CD8-positive, alpha-beta T cell (primary cell): ENCODE measurements at regions of chr15 and their contacts with region 1.

Region 1: GRCh38 chr15:85582131-85583079 is 202.0 kb downstream of the AKAP13 start:
- DNase-seq: peak; percentile 24 to 84 (median 75)
- ATAC-seq: peak; percentile 71
- H3K4me3 ChIP-seq: peak overlapping the region; percentile 54 to 57
- H3K4me3 Mint-ChIP-seq: peak overlapping the region; percentile 84
- H3K27ac ChIP-seq: peak overlapping the region; percentile 88 to 93
- H3K27ac Mint-ChIP-seq: peak overlapping the region; percentile 95
- H3K4me1 ChIP-seq: peaks cover 50% of the 10 kb centered on the region
- H3K4me1 Mint-ChIP-seq: peaks cover 75% of the 10 kb centered on the region
- H3K27me3 ChIP-seq: no peaks in the 10 kb centered on the region
- H3K27me3 Mint-ChIP-seq: no peaks in the 10 kb centered on the region
- CTCF ChIP-seq: no peak

Region 2: DNA sequence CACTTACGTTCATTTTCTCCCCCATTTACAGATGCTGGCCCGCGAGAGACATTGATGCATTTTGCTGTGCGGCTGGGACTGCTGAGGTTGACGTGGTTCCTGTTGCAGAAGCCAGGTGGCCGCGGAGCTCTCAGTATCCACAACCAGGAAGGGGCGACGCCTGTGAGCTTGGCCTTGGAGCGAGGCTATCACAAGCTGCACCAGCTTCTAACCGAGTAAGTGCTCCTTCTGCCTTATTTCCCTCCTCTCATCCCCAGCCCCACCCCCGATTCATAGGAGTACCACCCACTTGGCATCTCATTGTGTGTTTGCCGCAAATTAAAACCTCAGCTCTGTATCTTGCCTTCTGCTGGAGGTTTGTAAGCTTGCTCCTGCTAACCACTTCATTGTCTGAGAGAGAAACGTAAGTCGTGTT is 38.7 kb before region 1 on chr15:
- CTCF ChIA-PET with region 1: interaction called, 4 read pairs
- POLR2A ChIA-PET with region 1: interaction called, 4 read pairs
- intact Hi-C with region 1: loop called (anchors 2 to 5 kb)
- DNase-seq: peak; percentile 10 to 82 (median 61)
- ATAC-seq: peak; percentile 84
- H3K4me3 ChIP-seq: peak overlapping the region in 1 of 2 experiments; percentile 9
- H3K4me3 Mint-ChIP-seq: peak overlapping the region; percentile 67
- H3K27ac ChIP-seq: peak overlapping the region; percentile 11 to 24
- H3K27ac Mint-ChIP-seq: peak overlapping the region; percentile 78
- H3K4me1 ChIP-seq: peaks cover 40% of the 10 kb centered on the region
- H3K4me1 Mint-ChIP-seq: peaks cover 75% of the 10 kb centered on the region
- H3K27me3 ChIP-seq: no peaks in the 10 kb centered on the region
- H3K27me3 Mint-ChIP-seq: no peaks in the 10 kb centered on the region
- CTCF ChIP-seq: peak; percentile 34

Region 3: DNA sequence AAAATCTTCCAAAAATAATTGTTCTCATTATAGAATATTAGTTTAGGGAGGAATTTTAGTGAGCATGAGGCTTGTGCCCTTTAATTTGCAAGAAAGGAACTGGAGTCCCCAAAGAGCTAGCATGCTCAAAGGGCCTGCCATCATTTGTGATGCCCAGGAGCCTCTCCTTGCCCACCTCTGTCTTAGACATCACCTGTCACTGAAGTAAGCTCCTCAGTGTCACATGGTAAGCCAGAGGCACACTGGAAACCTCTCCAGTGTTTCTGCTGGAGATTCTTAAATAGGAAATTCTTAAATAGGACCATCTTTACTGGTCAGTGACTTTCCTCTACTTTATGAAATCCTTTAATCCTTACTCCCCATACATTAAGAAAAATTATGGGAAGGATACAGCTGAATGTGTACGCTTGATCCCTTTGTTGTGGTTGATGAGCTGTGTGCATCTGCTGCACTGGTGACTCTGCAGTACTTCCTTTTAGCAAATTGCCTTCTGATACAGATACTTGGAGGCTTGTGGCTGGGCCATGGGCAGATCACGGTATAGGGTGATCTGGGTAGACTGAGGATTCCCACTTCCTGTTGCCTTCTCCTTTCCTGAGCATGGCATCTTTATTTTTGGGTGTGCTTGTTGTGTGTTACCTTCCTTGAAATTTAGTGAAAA is 14.9 kb after region 1 on chr15:
- CTCF ChIA-PET with region 1: interaction called, 3 read pairs
- POLR2A ChIA-PET with region 1: interaction called, 5 read pairs
- intact Hi-C with region 1: loop called in 1 of 2 experiments (anchors 1 kb)
- DNase-seq: peak in 4 of 9 experiments; percentile 24 to 66 (median 32)
- ATAC-seq: peak; percentile 87
- H3K4me3 ChIP-seq: no peak overlapping the region
- H3K4me3 Mint-ChIP-seq: peak overlapping the region; percentile 30
- H3K27ac ChIP-seq: no peak overlapping the region
- H3K27ac Mint-ChIP-seq: peak overlapping the region; percentile 49
- H3K4me1 ChIP-seq: peaks cover 18% of the 10 kb centered on the region
- H3K4me1 Mint-ChIP-seq: peaks cover 50% of the 10 kb centered on the region
- H3K27me3 ChIP-seq: no peaks in the 10 kb centered on the region
- H3K27me3 Mint-ChIP-seq: no peaks in the 10 kb centered on the region
- CTCF ChIP-seq: no peak

Region 4: DNA sequence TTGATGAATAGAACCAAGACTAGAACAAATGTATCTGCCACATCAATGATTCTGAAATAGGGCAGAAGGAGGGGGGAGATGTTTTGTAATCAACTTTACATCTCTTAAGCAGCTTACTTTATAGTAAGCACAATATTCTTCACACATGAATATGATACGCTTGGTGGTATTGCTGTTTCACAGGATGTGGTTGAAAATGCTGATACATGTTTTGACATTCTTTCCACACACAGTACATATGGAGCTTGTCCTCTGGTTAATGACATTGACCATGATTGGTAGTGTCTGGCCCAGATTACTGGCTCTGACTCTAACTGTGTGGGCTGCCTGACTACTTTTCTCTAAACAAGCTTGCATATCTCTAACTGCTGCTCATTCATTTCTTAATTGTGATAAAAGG is 43.5 kb after region 1 on chr15:
- CTCF ChIA-PET with region 1: no interaction called
- POLR2A ChIA-PET with region 1: interaction called, 6 read pairs
- intact Hi-C with region 1: loop called in 1 of 2 experiments (anchors 2 kb)
- DNase-seq: peak in 3 of 9 experiments; percentile 11 to 82 (median 67)
- ATAC-seq: peak; percentile 72
- H3K4me3 ChIP-seq: no peak overlapping the region
- H3K4me3 Mint-ChIP-seq: peak overlapping the region; percentile 59
- H3K27ac ChIP-seq: peak overlapping the region; percentile 24 to 71
- H3K27ac Mint-ChIP-seq: peak overlapping the region; percentile 91
- H3K4me1 ChIP-seq: peaks cover 34% of the 10 kb centered on the region
- H3K4me1 Mint-ChIP-seq: peaks cover 73% of the 10 kb centered on the region
- H3K27me3 ChIP-seq: no peaks in the 10 kb centered on the region
- H3K27me3 Mint-ChIP-seq: no peaks in the 10 kb centered on the region
- CTCF ChIP-seq: no peak

Region 5: GRCh38 chr15:85667491-85668424 is 85.4 kb after region 1 on chr15:
- CTCF ChIA-PET with region 1: no interaction called
- POLR2A ChIA-PET with region 1: interaction called, 3 read pairs
- intact Hi-C with region 1: loop called in 1 of 2 experiments (anchors 5 kb)
- DNase-seq: peak in 8 of 9 experiments; percentile 23 to 97 (median 62)
- ATAC-seq: peak; percentile 91
- H3K4me3 ChIP-seq: no peak overlapping the region
- H3K4me3 Mint-ChIP-seq: peak overlapping the region; percentile 40
- H3K27ac ChIP-seq: peak overlapping the region; percentile 53 to 96
- H3K27ac Mint-ChIP-seq: peak overlapping the region; percentile 92
- H3K4me1 ChIP-seq: peaks cover 13% of the 10 kb centered on the region
- H3K4me1 Mint-ChIP-seq: peaks cover 22% of the 10 kb centered on the region
- H3K27me3 ChIP-seq: no peaks in the 10 kb centered on the region
- H3K27me3 Mint-ChIP-seq: no peaks in the 10 kb centered on the region
- CTCF ChIP-seq: no peak

Region 6: DNA sequence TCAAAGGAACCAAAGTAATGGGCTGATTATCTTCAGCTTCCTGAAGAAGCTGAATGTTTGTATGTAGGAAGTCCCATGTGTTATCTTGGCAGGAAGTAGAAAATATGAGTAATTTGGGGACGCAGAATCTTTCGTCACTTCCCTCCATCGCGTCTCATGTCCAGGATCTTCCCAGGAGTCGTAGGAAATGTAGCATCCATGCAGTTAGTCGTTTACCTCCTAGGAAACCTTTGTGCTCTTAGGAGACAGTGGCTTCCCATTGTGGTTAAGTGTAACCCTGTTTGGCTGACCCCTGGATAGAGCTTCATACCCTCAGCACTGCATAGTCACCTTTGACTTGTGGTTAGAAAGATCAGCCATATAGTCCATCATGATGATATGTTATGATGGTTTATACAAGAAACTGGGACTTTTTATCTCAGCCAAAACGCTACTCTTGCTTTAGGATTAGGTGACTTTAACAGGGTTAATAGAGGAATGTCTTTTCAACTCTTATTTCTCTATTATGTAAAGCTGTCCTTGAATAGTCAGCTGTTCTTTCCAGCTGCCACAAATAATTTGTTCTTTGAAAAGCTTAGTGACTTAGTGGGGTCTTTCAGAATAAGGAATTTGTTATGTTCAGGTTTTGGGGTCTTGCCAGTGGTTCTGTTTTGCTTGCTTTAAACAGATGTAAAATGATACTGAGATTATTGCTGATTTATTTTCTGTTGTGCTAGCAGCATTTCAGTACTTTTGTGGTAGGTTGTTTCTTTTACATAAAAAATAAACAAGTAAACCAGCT is 120.1 kb after region 1 on chr15:
- CTCF ChIA-PET with region 1: no interaction called
- POLR2A ChIA-PET with region 1: interaction called, 3 read pairs
- intact Hi-C with region 1: loop called (anchors 1 to 5 kb)
- DNase-seq: peak in 5 of 9 experiments; percentile 17 to 88 (median 39)
- ATAC-seq: peak; percentile 40
- H3K4me3 ChIP-seq: peak overlapping the region; percentile 3 to 24
- H3K4me3 Mint-ChIP-seq: peak overlapping the region; percentile 70
- H3K27ac ChIP-seq: peak overlapping the region; percentile 70 to 97
- H3K27ac Mint-ChIP-seq: peak overlapping the region; percentile 94
- H3K4me1 ChIP-seq: peaks cover 64% of the 10 kb centered on the region
- H3K4me1 Mint-ChIP-seq: peaks cover 78% of the 10 kb centered on the region
- H3K27me3 ChIP-seq: no peaks in the 10 kb centered on the region
- H3K27me3 Mint-ChIP-seq: no peaks in the 10 kb centered on the region
- CTCF ChIP-seq: no peak

Region 7: GRCh38 chr15:85707519-85708338 is 125.3 kb after region 1 on chr15:
- CTCF ChIA-PET with region 1: no interaction called
- POLR2A ChIA-PET with region 1: no interaction called
- intact Hi-C with region 1: loop called (anchors 1 to 5 kb)
- DNase-seq: no peak
- ATAC-seq: peak; percentile 22
- H3K4me3 ChIP-seq: peak overlapping the region; percentile 32 to 40
- H3K4me3 Mint-ChIP-seq: peak overlapping the region; percentile 77
- H3K27ac ChIP-seq: peak overlapping the region; percentile 66 to 97
- H3K27ac Mint-ChIP-seq: peak overlapping the region; percentile 99
- H3K4me1 ChIP-seq: peaks cover 56% of the 10 kb centered on the region
- H3K4me1 Mint-ChIP-seq: peaks cover 82% of the 10 kb centered on the region
- H3K27me3 ChIP-seq: no peaks in the 10 kb centered on the region
- H3K27me3 Mint-ChIP-seq: no peaks in the 10 kb centered on the region
- CTCF ChIP-seq: no peak

Region 8: GRCh38 chr15:85831415-85832113 is 249.2 kb after region 1 on chr15:
- CTCF ChIA-PET with region 1: no interaction called
- POLR2A ChIA-PET with region 1: no interaction called
- intact Hi-C with region 1: no loop called
- DNase-seq: peak in 4 of 9 experiments; percentile 16 to 45 (median 26)
- ATAC-seq: no peak
- H3K4me3 ChIP-seq: no peak overlapping the region
- H3K4me3 Mint-ChIP-seq: no peak overlapping the region
- H3K27ac ChIP-seq: no peak overlapping the region
- H3K27ac Mint-ChIP-seq: no peak overlapping the region
- H3K4me1 ChIP-seq: no peaks in the 10 kb centered on the region
- H3K4me1 Mint-ChIP-seq: no peaks in the 10 kb centered on the region
- H3K27me3 ChIP-seq: no peaks in the 10 kb centered on the region
- H3K27me3 Mint-ChIP-seq: peaks cover 5% of the 10 kb centered on the region
- CTCF ChIP-seq: no peak